Endothelial cell of umbilical vein (primary cell): ENCODE measurements at regions of chr13 and their contacts with region 1.

Region 1: GRCh38 chr13:102394158-102395053 is 7.4 kb downstream of the FGF14 start:
- DNase-seq: peak; percentile 75
- H3K4me3 ChIP-seq: peak overlapping the region; percentile 60 to 68 (median 65)
- H3K27ac ChIP-seq: no peak overlapping the region
- H3K4me1 ChIP-seq: peaks cover 9% of the 10 kb centered on the region
- H3K27me3 ChIP-seq: peaks cover 11 to 26% of the 10 kb centered on the region in 2 experiments
- CTCF ChIP-seq: peak in 1 of 2 donors; percentile 30
- POLR2A ChIP-seq: no peak

Region 2: GRCh38 chr13:102197193-102197592 is 197.2 kb before region 1 on chr13:
- CTCF ChIA-PET with region 1: no interaction called
- POLR2A ChIA-PET with region 1: no interaction called
- dilution Hi-C with region 1: no loop called
- intact Hi-C with region 1: loop called (anchors 5 kb)
- DNase-seq: no peak
- H3K4me3 ChIP-seq: no peak overlapping the region
- H3K27ac ChIP-seq: no peak overlapping the region
- H3K4me1 ChIP-seq: peaks cover 30% of the 10 kb centered on the region
- H3K27me3 ChIP-seq: no peaks in the 10 kb centered on the region
- CTCF ChIP-seq: no peak
- POLR2A ChIP-seq: no peak

Region 3: GRCh38 chr13:102422690-102423089 is 28.3 kb after region 1 on chr13:
- CTCF ChIA-PET with region 1: no interaction called
- POLR2A ChIA-PET with region 1: no interaction called
- dilution Hi-C with region 1: no loop called
- intact Hi-C with region 1: no loop called
- DNase-seq: no peak
- H3K4me3 ChIP-seq: no peak overlapping the region
- H3K27ac ChIP-seq: no peak overlapping the region
- H3K4me1 ChIP-seq: no peaks in the 10 kb centered on the region
- H3K27me3 ChIP-seq: no peaks in the 10 kb centered on the region
- CTCF ChIP-seq: no peak
- POLR2A ChIP-seq: no peak